PC-9 (cell line): ENCODE measurements at regions of chr3 and their contacts with region 1.

Region 1: DNA sequence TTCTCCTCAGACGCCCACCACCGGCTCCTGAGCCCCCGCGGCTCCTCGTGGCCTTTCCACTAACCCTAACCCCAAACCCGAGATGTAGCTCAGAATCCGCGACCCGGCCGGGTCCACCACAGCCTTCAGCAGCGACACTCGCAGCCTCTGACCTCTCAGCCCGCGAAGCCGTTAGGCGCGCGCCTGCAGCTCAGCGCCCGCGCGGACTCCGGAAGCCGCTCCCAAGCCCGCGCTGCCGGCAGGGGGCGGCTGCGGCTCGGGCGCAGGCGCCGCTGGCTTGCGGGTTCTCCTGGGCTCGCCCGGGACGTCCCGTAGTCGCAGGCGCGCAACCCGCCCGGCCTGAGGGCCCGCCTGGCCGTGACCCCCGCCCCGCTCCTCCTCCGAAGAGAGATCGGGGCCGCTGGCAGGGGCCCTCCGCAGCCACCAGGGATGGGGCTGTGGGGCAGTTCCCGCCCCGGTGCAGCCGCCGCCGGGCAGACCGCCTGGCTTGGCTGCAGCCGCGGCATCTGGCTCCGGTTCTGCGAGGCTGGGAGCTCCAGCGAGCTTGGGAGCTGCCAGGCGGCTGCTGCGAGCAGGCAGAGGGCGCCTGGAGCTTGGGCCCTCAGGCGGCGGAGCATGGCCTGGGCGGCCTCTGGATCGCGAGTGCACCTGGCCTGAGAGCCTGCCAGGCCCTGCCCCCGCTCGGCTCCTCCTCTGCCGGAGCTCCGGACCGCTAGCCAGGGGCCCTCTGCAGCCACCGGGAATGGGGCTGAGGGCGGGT is 120.7 kb downstream of the LMLN start:
- DNase-seq: peak; percentile 68 to 93
- H3K4me3 ChIP-seq: peak overlapping the region; percentile 59; the same call in 1 of the 2 replicates
- H3K27ac ChIP-seq: no peak overlapping the region
- H3K4me1 ChIP-seq: 0 out of 2 replicates have a peak, but pooled peaks cover 7% of the 10 kb centered on the region
- H3K27me3 ChIP-seq: peaks cover 21% of the 10 kb centered on the region; the same call in 1 of the 2 replicates
- CTCF ChIP-seq: peak; percentile 72

Region 2: DNA sequence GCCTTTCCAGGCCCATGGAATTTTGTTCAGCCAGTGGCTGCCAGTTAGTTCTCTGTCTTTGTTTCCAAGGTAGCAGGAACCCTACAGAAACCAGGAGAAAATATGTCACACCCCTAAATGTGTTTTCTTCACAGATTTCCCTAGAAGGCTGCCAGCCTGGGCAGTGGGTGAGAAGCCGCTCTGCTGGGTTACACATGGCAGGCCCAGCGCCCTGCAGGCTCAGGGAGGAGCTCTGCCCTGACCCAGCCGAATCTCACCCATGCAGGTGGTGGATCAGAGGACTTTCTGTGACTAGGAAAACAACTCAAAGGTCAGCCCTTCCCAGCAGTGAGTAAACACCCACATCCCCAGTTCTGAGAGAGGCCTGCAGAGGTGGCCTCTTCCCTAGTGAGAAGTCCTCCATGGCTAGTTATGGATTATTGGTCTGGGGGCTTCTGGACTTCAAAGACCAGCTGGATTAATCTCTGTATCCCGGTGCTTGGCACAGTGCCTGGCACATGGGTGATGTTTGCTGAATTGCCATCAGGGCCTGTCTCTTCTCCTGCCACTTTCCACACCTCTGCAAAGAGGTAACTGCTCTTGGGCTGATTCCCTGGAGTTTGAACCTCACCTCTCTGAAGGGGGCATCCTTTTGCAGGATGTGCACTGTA is 490.3 kb before region 1 on chr3:
- CTCF ChIA-PET with region 1: interaction called, 10 read pairs
- POLR2A ChIA-PET with region 1: no interaction called
- intact Hi-C with region 1: no loop called
- DNase-seq: peak; percentile 51 to 73
- H3K4me3 ChIP-seq: no peak overlapping the region
- H3K27ac ChIP-seq: peak overlapping the region; percentile 25
- H3K4me1 ChIP-seq: peaks cover 11% of the 10 kb centered on the region
- H3K27me3 ChIP-seq: no peaks in the 10 kb centered on the region
- CTCF ChIP-seq: no peak

Region 3: DNA sequence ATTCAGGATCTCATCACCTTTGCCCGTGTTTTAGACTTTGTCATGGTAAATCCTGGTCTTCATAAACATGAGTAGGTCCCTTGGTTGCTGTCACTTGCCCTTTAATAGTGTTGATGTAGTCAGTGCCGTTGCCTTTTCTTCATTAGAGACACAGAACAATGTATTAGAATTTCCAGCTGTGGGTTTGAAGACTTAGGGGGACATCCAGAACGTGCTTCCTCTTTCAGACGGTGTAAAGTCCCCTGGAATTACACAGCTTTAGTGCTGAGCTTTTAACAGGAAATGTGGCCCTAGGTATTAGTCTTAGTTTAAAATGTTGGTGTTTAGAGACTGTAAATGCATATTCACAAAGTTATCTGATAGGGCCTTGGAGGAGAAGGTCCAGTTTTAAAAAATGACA is 298.5 kb before region 1 on chr3:
- CTCF ChIA-PET with region 1: no interaction called
- POLR2A ChIA-PET with region 1: no interaction called
- intact Hi-C with region 1: no loop called
- DNase-seq: no peak
- H3K4me3 ChIP-seq: no peak overlapping the region
- H3K27ac ChIP-seq: no peak overlapping the region
- H3K4me1 ChIP-seq: peaks cover 7% of the 10 kb centered on the region
- H3K27me3 ChIP-seq: no peaks in the 10 kb centered on the region
- CTCF ChIP-seq: no peak

Region 4: DNA sequence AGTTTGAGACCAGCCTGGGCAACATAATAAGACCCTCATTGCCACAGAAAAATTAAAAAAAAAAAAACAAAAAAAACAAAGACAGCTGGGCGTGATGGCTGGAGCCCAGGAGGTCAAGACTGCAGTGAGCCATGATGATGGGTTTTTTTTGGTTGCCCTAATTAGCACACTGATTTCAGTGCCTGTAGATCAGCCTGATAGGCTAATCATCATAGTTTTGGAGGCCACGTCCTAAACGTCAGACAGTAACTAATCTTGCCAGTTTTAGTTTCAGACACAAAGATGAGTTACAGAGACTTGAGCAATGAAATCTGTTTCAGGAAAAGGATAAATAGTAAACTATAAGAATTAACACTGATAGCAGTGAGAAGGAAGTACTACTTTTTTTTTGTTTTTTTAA is 234.2 kb before region 1 on chr3:
- CTCF ChIA-PET with region 1: no interaction called
- POLR2A ChIA-PET with region 1: no interaction called
- intact Hi-C with region 1: no loop called
- DNase-seq: no peak
- H3K4me3 ChIP-seq: no peak overlapping the region
- H3K27ac ChIP-seq: no peak overlapping the region
- H3K4me1 ChIP-seq: no peaks in the 10 kb centered on the region
- H3K27me3 ChIP-seq: no peaks in the 10 kb centered on the region
- CTCF ChIP-seq: no peak

Region 5: GRCh38 chr3:197912770-197913476 is 167.8 kb before region 1 on chr3:
- CTCF ChIA-PET with region 1: interaction called, 12 read pairs
- POLR2A ChIA-PET with region 1: no interaction called
- intact Hi-C with region 1: no loop called
- DNase-seq: no peak
- H3K4me3 ChIP-seq: no peak overlapping the region
- H3K27ac ChIP-seq: no peak overlapping the region
- H3K4me1 ChIP-seq: no peaks in the 10 kb centered on the region
- H3K27me3 ChIP-seq: no peaks in the 10 kb centered on the region
- CTCF ChIP-seq: no peak

Region 6: GRCh38 chr3:197989651-197990050 is 91.0 kb before region 1 on chr3:
- CTCF ChIA-PET with region 1: no interaction called
- POLR2A ChIA-PET with region 1: no interaction called
- intact Hi-C with region 1: no loop called
- DNase-seq: peak in 1 of 2 experiments; percentile 25
- H3K4me3 ChIP-seq: no peak overlapping the region
- H3K27ac ChIP-seq: no peak overlapping the region
- H3K4me1 ChIP-seq: no peaks in the 10 kb centered on the region
- H3K27me3 ChIP-seq: no peaks in the 10 kb centered on the region
- CTCF ChIP-seq: no peak

Region 7: DNA sequence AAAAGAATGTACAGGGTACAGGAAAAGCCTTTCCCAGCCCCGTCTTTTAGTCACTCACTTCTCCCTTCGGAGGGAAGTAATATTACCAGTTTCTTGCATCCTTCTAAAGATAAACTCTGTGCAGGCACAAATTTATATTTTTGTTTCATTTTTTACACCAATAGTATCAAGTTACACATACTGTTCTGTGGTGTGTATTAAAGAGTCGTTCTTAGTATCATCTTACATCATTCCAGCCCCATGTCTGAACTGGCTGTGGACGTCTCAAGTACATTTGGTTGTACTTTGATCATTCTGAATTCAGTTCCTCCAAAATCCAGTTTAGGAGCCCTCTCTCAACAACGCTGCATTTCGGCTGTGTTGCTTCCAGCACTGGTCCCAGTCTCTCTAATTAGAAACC is 52.0 kb before region 1 on chr3:
- CTCF ChIA-PET with region 1: no interaction called
- POLR2A ChIA-PET with region 1: no interaction called
- intact Hi-C with region 1: no loop called
- DNase-seq: no peak
- H3K4me3 ChIP-seq: no peak overlapping the region
- H3K27ac ChIP-seq: no peak overlapping the region
- H3K4me1 ChIP-seq: no peaks in the 10 kb centered on the region; the same call in 1 of the 2 replicates
- H3K27me3 ChIP-seq: no peaks in the 10 kb centered on the region
- CTCF ChIP-seq: no peak